AG04449 (cell line): ENCODE measurements at regions of chr12 and their contacts with region 1.

Region 1: GRCh38 chr12:56266693-56267442 is at the start of gene COQ10A:
- DNase-seq: no peak
- H3K4me3 ChIP-seq: peak within 1 kb of the TSS; percentile 87
- CTCF ChIP-seq: peak; percentile 78

Region 2: GRCh38 chr12:56278905-56279304 is 12.0 kb after region 1 on chr12:
- CTCF ChIA-PET with region 1: interaction called, 37 read pairs
- POLR2A ChIA-PET with region 1: interaction called, 7 read pairs
- DNase-seq: no peak
- H3K4me3 ChIP-seq: no peak overlapping the region
- CTCF ChIP-seq: no peak

Region 3: DNA sequence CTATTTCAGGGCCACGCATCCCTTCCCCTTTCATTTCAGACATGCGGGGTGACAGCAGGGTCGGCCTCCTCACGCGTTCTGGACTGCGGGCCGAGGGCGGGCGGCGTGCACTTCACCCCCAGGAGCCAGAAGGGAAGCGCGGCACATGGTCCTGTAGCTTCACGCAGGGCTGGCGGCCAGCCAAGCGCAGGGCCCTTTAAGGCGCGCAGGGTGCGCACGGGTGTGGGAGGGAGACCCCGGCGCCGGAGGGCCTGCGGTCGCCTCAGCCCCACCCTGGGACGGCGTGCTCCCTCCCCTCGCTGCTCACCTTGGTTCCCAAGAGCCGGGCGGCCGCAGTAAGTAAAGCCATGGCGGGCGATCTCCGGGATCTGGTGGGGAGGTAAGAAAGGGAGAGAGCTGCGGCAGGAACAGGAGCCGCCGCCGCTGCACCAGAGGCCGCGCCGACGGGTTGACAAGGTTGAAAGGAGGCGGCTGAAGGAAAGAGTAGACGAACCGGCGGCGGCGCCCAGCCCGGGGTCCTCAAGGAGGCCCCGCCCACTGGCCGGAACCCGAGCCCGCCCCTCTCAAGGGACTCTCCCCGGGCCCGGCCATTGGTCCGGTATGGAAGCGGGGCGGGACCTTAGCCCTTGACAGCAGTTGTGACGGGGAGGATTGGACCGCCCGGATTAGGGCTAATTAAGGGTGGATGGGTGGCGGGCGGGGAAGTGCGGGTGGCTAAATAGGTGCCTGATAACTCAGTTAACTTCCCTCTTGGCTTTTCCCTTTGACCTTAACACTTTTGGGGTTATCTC is 33.2 kb after region 1 on chr12 and contains the start of gene CS:
- CTCF ChIA-PET with region 1: interaction called, 14 read pairs
- POLR2A ChIA-PET with region 1: interaction called, 3 read pairs
- DNase-seq: peak; percentile 67
- H3K4me3 ChIP-seq: peak within 1 kb of the TSS; percentile 93
- CTCF ChIP-seq: no peak

Region 4: DNA sequence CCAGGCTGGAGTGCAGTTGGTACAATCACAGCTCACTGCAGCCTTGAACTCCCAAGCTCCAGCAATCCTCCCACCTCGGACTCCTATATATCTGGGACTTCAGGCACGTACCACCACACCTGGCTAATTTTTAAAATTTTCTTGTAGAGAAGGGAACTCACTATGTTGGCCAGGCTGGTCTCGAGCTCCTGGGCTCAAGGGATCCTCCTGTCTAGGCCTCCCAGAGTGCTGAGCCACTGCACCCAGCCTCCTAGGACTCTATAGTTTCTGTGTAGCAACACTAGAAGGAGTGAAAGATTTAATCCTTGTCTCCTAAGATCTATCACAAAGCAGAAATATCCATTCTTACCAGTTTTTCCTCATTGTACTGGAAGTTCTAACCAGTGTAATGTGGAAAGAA is 100.1 kb after region 1 on chr12:
- CTCF ChIA-PET with region 1: no interaction called
- POLR2A ChIA-PET with region 1: no interaction called
- DNase-seq: no peak
- H3K4me3 ChIP-seq: no peak overlapping the region
- CTCF ChIP-seq: no peak